Testis (tissue), 5 donors: ENCODE measurements at regions of chr10 and their contacts with region 1.

Region 1: GRCh38 chr10:71569775-71570588 is 149.6 kb downstream of the C10orf105 start:
- DNase-seq: peak; percentile 87
- H3K4me3 ChIP-seq: no peak overlapping the region
- H3K27ac ChIP-seq: no peak overlapping the region
- H3K4me1 ChIP-seq: no peaks in the 10 kb centered on the region
- H3K27me3 ChIP-seq: no peaks in the 10 kb centered on the region
- CTCF ChIP-seq: peak; percentile 87 to 91 (median 88)
- POLR2A ChIP-seq: no peak

Region 2: DNA sequence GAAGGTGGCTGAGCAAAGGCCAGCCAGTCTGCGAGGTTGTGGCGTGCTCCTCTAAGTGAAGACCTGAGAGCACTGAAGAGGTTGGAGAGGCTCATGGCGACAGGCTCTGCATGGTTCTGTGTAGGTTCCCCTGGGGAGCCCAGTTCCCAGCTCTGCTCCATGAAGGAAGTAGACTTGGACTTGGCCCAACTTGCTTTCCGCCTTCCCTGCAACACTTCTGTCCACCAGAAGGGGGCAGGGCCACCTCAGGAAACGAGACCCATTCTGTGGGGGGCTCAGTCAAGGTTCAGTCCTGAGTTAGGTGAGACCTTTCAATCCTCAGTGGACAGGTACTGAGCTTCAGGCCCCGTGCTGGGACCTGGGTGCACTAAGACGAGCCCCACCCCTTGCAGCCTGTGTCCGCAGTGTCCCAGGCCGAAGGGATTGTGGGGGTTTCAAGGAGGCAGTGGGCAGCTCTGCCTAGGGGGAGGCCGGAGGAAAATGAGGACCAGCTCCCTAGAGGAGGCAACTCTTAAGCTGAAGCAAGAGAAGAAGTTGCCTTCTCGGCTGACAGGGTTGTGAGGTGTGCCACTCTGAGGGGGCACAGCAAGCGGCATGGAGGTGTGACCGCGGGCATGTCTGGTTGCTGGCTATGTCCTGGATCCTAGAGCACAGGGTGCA is 666.6 kb before region 1 on chr10:
- intact Hi-C with region 1: no loop called
- DNase-seq: peak; percentile 77
- H3K4me3 ChIP-seq: no peak overlapping the region
- H3K27ac ChIP-seq: no peak overlapping the region
- H3K4me1 ChIP-seq: no peaks in the 10 kb centered on the region
- H3K27me3 ChIP-seq: no peaks in the 10 kb centered on the region
- CTCF ChIP-seq: peak; percentile 49 to 87 (median 83)
- POLR2A ChIP-seq: no peak

Region 3: GRCh38 chr10:71319042-71319799 is 250.8 kb before region 1 on chr10 and contains the start of gene SLC29A3:
- intact Hi-C with region 1: loop called (anchors 10 kb)
- DNase-seq: peak; percentile 85
- H3K4me3 ChIP-seq: peak within 1 kb of the TSS; percentile 65 to 83
- H3K27ac ChIP-seq: peak within 1 kb of the TSS; percentile 63 to 80
- H3K4me1 ChIP-seq: peaks cover 16% of the 10 kb centered on the region
- H3K27me3 ChIP-seq: no peaks in the 10 kb centered on the region
- CTCF ChIP-seq: peak; percentile 30 to 57 (median 50)
- POLR2A ChIP-seq: no peak
- total RNA-seq, gene SLC29A3: 10.7 to 14.0 TPM

Region 4: GRCh38 chr10:71396084-71396720 is 173.8 kb before region 1 on chr10:
- intact Hi-C with region 1: loop called (anchors 5 kb)
- DNase-seq: peak; percentile 86
- H3K4me3 ChIP-seq: peak overlapping the region; percentile 55 to 64
- H3K27ac ChIP-seq: peak overlapping the region; percentile 63 to 69
- H3K4me1 ChIP-seq: peaks cover 11% of the 10 kb centered on the region
- H3K27me3 ChIP-seq: no peaks in the 10 kb centered on the region
- CTCF ChIP-seq: peak; percentile 65 to 82 (median 65)
- POLR2A ChIP-seq: no peak